ENCODE measurements at regions of chr19 and their contacts with region 1.

Region 1: DNA sequence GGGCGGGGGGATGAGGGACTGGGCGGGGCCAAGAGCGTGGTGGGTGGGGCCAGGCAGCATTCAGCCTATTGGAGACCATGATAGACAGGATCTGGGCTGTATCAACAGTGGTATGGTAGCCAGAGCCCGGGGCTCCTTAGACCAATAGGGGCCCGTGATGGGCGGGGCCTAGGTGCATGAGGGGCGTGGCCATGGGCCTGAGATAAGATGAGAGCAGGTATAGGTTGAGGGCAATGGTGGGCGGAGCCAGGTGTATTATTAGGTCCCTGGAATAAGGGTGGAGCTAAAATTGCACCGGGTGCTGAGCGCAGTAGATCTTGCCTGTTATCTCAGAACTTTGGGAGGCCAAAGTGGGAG is 5.3 kb downstream of the ABCA7 start:
- DNase-seq: peak in 5 of 10 donors; percentile 63 to 72 (median 67)
- ATAC-seq: peak; percentile 28 to 74
- H3K4me3 Mint-ChIP-seq: peak overlapping the region in 1 of 10 donors; percentile 35
- H3K27ac Mint-ChIP-seq: peak overlapping the region in 6 of 10 donors; percentile 13 to 76 (median 60)
- H3K4me1 Mint-ChIP-seq: peaks cover 6 to 23% (median 10%) of the 10 kb centered on the region in 4 donors
- H3K27me3 Mint-ChIP-seq: no peaks in the 10 kb centered on the region

Region 2: DNA sequence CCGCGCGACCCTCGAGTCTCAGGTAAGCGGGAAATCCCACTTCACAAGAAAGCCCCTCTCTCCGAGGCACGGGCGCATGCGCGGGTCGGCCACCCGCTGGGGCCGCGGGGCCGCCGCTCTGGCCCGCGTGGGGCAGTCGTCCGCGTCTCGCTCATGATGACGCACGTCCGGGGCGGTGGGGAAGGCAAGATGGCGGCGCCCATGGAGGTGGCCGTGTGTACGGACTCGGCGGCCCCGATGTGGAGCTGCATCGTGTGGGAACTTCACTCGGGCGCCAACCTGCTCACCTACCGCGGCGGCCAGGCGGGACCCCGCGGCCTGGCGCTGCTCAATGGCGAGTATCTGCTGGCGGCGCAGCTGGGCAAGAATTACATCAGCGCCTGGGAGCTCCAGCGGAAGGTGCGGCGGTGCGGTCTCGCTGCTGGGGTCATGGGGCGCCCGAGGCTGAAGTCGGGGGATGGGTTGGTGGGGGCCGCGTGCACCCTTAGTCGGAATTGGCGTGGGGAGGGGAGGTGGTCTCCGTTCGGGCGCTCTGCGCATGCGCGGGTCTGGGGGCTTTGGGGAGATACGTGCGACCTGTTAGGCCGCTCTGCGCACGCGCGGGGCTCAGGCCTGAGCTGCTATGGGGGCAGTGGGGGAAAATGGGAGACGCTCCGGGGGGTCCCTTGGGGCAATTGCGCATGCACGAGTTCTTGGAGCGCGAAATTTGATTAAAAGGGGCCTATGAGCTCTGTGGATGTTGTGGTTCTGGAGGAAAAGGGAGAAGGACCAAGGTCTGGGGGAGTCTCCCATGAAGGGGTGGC is 60.9 kb before region 1 on chr19 and contains the start of gene WDR18:
- POLR2A ChIA-PET with region 1: no interaction called
- DNase-seq: peak; percentile 73 to 94 (median 80)
- ATAC-seq: peak; percentile 86 to 89
- H3K4me3 Mint-ChIP-seq: peak within 1 kb of the TSS; percentile 87 to 99 (median 92)
- H3K27ac Mint-ChIP-seq: peak within 1 kb of the TSS; percentile 63 to 96 (median 92)
- H3K4me1 Mint-ChIP-seq: peaks cover 12 to 25% (median 20%) of the 10 kb centered on the region in 4 donors
- H3K27me3 Mint-ChIP-seq: no peaks in the 10 kb centered on the region
- polyA plus RNA-seq, gene WDR18: 51.2 to 72.7 (median 64.1) TPM

Region 3: GRCh38 chr19:1026189-1027019 is 18.8 kb before region 1 on chr19 and contains the start of gene CNN2:
- POLR2A ChIA-PET with region 1: interaction called, 400 read pairs
- DNase-seq: peak in 8 of 10 donors; percentile 46 to 71 (median 56)
- ATAC-seq: peak; percentile 13 to 34
- H3K4me3 Mint-ChIP-seq: peak within 1 kb of the TSS; percentile 94 to 99 (median 98)
- H3K27ac Mint-ChIP-seq: peak within 1 kb of the TSS; percentile 89 to 98 (median 96)
- H3K4me1 Mint-ChIP-seq: peaks cover 13 to 35% (median 27%) of the 10 kb centered on the region in 4 donors
- H3K27me3 Mint-ChIP-seq: peaks cover 0 to 2% (median 0%) of the 10 kb centered on the region in 5 donors
- polyA plus RNA-seq, gene CNN2: 498 to 693 (median 515) TPM

Measured in naive thymus-derived CD8-positive, alpha-beta T cell (primary cell).